ENCODE measurements at regions of chr1 and their contacts with region 1.

Region 1: DNA sequence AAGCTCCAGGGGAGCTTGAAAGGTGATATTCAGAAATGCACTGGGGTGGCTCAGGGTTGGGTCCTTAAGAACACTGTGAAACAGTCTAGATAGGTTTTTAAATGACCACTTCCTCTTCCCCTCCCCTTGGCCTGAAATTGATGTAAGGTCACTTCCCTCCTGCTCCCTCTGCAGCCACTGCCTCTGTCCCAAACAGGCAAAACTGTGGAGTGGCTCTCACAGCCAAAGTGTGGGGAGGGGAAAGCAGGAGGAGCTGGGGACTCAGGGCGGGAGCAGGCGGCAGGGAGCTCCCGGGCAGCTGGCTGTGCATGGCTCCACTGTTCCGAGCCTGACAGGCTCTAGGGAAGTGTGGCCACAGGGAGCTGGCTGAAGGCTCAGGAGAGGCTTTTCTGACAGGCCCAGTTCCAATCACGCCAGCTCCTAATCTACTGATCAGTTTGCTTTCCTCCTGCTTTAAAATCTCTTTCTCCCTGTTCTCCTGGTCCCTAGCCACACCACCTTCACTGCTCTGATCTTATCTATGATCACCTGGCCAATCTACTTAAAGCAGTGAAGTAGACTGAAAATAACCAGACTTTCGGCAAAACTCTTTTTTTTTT is 5.1 kb upstream of the CSRP1 start:
- DNase-seq: peak; percentile 84
- H3K4me3 ChIP-seq: peak overlapping the region in 1 of 8 donors; percentile 6
- H3K27ac ChIP-seq: peak overlapping the region in 7 of 8 donors; percentile 61 to 78 (median 68)
- H3K4me1 ChIP-seq: peaks cover 14 to 47% (median 31%) of the 10 kb centered on the region in 6 donors
- H3K27me3 ChIP-seq: no peaks in the 10 kb centered on the region
- CTCF ChIP-seq: no peak
- POLR2A ChIP-seq: no peak

Region 2: DNA sequence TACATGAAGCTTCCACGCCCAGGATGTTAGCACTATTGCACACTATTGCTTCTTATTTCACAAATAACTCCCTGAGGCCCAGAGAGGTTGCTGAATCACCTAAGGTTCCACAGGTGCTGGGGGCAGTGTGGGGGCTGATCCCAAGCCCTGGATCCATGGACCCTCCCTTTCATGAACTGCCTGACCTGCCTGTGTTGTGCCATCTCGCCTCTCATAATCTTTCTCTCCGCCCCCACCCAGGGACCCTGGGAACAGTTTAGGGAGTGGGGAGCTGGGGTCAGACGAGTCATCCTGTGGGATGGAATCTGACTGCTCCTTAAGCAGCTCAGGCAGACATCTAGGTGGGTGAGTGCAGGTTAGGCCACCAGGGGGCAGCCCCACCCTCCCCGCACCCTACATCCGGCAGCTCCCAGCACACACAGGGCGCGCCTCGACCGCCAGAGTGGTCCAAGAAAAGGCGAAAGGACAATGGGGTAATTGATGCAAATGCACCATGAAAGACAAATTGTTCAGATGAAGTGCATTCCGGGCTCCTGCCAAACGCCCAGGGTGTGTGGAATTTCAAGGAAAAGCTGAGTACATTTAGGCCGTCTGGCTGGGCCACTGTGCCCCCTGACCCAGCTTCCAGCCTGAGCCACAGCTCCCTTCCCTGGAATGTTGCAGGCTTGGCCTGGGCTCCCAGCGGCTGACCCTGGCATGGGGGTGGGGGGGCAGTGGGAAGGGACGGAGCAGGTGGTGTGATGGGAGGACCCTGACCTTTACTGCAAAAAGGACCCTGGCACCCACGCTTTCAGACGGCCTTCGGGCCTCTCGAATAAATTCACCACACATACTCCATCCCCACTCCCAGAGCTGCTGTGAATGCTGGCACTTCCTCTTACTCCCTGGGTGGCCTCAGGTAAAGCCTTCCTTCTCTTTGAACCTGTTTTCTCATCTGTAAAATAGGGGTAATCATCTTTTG is 63.8 kb before region 1 on chr1:
- intact Hi-C with region 1: loop called (anchors 10 kb)
- DNase-seq: peak; percentile 88
- H3K4me3 ChIP-seq: no peak overlapping the region
- H3K27ac ChIP-seq: peak overlapping the region in 4 of 8 donors; percentile 24 to 37 (median 34)
- H3K4me1 ChIP-seq: peaks cover 0 to 44% (median 24%) of the 10 kb centered on the region in 6 donors
- H3K27me3 ChIP-seq: peaks cover 0 to 15% (median 0%) of the 10 kb centered on the region in 7 donors
- CTCF ChIP-seq: peak; percentile 27 to 83 (median 76)
- POLR2A ChIP-seq: no peak

Region 3: DNA sequence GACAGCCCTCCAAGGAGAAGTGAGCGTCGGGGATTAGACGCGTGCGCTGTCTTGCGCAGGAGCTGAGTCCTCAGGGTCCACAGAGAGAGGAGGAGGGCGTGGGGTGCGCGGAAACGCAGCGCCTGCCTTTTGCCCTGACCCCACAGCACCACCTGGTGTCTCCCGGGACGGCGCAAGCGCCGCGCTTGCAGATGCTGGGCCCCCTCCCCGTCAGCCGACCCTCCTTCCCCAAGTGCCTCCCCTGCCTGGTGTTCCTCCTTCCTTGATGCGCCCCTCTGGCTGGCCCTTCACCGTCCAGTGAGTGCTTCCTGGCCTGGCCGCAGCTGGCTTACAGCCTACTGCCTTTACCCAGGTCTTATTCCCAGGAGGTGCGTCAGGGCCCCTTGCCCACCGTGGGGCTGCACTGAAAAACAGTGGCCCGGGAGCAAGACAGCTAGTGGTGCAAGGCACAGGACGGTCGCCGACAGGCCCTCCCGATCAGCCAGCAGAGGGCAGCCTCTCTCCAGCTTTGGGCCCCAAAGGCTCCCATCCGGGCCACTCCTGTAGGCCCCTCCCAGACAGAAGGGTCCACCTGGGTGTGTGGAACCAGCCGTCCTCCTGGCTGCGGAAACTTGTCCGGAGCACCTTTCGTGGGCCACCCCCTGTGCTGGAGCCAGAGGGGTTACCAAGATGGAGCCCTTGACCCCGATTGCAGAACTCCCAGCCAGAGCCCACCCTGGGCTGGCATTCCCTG is 30.1 kb before region 1 on chr1:
- intact Hi-C with region 1: loop called (anchors 2 kb)
- DNase-seq: peak; percentile 95
- H3K4me3 ChIP-seq: peak overlapping the region in 7 of 8 donors; percentile 34 to 73 (median 41)
- H3K27ac ChIP-seq: peak overlapping the region in 3 of 8 donors; percentile 30 to 70 (median 66)
- H3K4me1 ChIP-seq: peaks cover 17 to 52% (median 45%) of the 10 kb centered on the region in 6 donors
- H3K27me3 ChIP-seq: peaks cover 0 to 20% (median 10%) of the 10 kb centered on the region in 7 donors
- CTCF ChIP-seq: peak; percentile 77 to 94 (median 91)
- POLR2A ChIP-seq: no peak

Region 4: DNA sequence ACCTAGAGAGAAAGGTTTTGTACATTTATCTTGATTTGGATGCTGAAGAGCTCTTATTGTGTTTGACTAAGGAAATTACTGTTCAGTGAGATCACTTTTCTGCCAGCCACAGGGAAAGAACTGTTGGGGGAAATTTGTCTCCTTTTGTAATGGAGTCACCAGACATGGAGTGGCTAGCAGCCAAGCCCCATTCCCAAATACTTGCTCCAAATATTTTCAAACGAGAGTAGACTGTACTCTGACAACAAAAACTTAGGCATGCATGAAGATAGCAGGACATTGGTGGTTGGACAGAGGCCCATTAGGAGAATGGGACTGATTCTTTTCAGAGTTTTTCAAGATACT is 338.0 kb after region 1 on chr1:
- intact Hi-C with region 1: no loop called
- DNase-seq: no peak
- H3K4me3 ChIP-seq: no peak overlapping the region
- H3K27ac ChIP-seq: no peak overlapping the region
- H3K4me1 ChIP-seq: peaks cover 0 to 14% (median 0%) of the 10 kb centered on the region in 6 donors
- H3K27me3 ChIP-seq: no peaks in the 10 kb centered on the region
- CTCF ChIP-seq: no peak
- POLR2A ChIP-seq: no peak